HEK293 (cell line): ENCODE measurements at regions of chr16 and their contacts with region 1.

Region 1: DNA sequence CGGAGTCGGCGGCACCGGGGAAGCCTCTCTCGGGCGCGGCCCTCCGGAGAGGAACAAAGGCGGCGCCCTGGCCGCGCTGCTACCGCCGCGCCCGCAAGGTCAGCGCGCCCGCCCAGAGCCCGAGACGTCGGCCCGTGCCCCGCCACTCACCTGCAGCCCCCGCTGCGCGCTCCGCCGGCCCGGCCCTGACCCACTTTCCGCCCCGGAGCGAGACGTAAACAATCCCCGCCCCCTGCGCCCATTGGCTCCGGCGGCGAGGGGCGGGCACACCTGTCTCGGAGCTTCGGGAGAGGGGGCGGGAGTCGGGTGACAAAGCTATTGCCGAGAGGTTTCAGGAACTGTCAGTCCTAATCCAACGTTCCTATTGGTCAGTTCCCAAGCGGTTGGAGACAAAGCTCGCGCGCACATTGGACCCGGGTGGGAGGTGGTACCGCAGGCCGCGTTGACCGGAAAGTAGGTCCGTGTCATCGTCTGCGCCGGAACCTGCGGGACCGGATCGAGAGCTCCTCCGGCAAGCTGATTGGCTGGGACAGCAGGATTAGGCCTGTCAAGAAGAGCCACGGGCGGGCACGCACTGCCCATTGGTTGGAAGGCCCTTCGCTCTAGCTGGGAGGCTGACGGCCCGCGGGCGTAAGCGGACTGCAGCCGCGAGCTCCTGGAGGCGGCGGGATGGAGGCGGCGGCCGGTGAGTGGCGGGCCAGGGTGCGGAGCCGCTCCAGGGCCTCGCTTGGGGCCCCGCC is at the starts of genes NUBP2 and SPSB3:
- H3K4me3 ChIP-seq: peak within 1 kb of the TSS; percentile 90
- H3K27ac ChIP-seq: peak within 1 kb of the TSS; percentile 87
- H3K4me1 ChIP-seq: peaks cover 6% of the 10 kb centered on the region
- CTCF ChIP-seq: no peak

Region 2: GRCh38 chr16:1705688-1706385 is 76.7 kb before region 1 on chr16 and contains the start of gene MAPK8IP3:
- CTCF ChIA-PET with region 1: interaction called, 3 read pairs
- POLR2A ChIA-PET with region 1: interaction called, 14 read pairs
- H3K4me3 ChIP-seq: peak within 1 kb of the TSS; percentile 94
- H3K27ac ChIP-seq: peak within 1 kb of the TSS; percentile 83
- H3K4me1 ChIP-seq: peaks cover 11% of the 10 kb centered on the region; the same call in 1 of the 2 replicates
- CTCF ChIP-seq: peak; percentile 77

Region 3: GRCh38 chr16:1800701-1801100 is 18.2 kb after region 1 on chr16:
- CTCF ChIA-PET with region 1: no interaction called
- POLR2A ChIA-PET with region 1: interaction called, 10 read pairs
- H3K4me3 ChIP-seq: no peak overlapping the region
- H3K27ac ChIP-seq: no peak overlapping the region
- H3K4me1 ChIP-seq: no peaks in the 10 kb centered on the region
- CTCF ChIP-seq: no peak

Region 4: GRCh38 chr16:1826691-1827575 is 44.4 kb after region 1 on chr16 and contains the starts of genes FAHD1 and HAGH:
- CTCF ChIA-PET with region 1: no interaction called
- POLR2A ChIA-PET with region 1: interaction called, 12 read pairs
- H3K4me3 ChIP-seq: peak within 1 kb of the TSS; percentile 97
- H3K27ac ChIP-seq: peak within 1 kb of the TSS; percentile 78; the same call in 1 of the 2 replicates
- H3K4me1 ChIP-seq: no peaks in the 10 kb centered on the region
- CTCF ChIP-seq: no peak; the same call in 1 of the 2 replicates

Region 5: DNA sequence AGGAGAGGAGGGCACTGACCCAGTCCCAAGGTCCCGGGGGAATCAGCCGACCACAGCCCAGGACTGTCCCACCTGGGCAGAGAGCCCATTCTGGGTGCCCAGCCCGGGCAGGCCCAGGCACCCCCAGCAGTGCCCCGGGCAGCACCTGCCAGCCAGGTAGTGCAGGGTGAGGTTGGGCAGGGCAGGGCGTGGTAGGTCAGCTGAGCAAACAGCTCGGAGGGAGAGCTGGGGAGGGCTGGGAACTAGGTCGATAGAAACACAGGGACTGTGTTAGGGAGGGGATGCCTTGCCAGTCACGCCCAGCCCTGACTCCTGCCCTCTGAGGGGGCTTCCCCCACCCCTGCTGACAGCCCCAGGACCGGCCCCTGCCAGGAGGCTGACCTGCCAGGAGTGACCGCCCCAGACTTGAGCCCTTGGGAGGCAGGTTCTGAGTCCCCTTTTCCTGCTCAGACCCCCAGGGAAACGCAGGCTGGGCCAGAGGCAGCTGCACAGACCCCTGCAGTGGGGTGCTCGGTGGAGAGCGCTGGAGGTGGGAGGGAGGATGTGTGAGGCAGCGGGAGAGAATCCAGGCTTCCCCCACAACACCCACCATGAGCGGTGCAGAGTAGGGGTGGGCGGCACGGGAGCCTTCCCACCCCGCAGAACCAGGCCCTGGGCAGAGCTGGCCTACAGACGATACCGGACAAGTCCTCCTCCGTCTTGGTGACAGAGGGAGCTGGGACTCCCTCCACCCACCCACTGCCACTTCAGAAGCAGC is 131.0 kb after region 1 on chr16:
- CTCF ChIA-PET with region 1: no interaction called
- POLR2A ChIA-PET with region 1: interaction called, 10 read pairs
- H3K4me3 ChIP-seq: no peak overlapping the region
- H3K27ac ChIP-seq: no peak overlapping the region
- H3K4me1 ChIP-seq: no peaks in the 10 kb centered on the region
- CTCF ChIP-seq: no peak